Calu3 (cell line): ENCODE measurements at regions of chr15 and their contacts with region 1.

Region 1: GRCh38 chr15:66707310-66708082 is 5.5 kb downstream of the SMAD6 start:
- DNase-seq: peak; percentile 60
- H3K4me3 Mint-ChIP-seq: peak overlapping the region; percentile 98
- H3K27ac Mint-ChIP-seq: no peak overlapping the region
- H3K4me1 Mint-ChIP-seq: peaks cover 21% of the 10 kb centered on the region
- H3K27me3 Mint-ChIP-seq: no peaks in the 10 kb centered on the region
- CTCF ChIP-seq: no peak

Region 2: GRCh38 chr15:66685638-66686150 is 21.8 kb before region 1 on chr15:
- CTCF ChIA-PET with region 1: no interaction called
- intact Hi-C with region 1: no loop called
- DNase-seq: no peak
- H3K4me3 Mint-ChIP-seq: no peak overlapping the region
- H3K27ac Mint-ChIP-seq: no peak overlapping the region
- H3K4me1 Mint-ChIP-seq: no peaks in the 10 kb centered on the region
- H3K27me3 Mint-ChIP-seq: no peaks in the 10 kb centered on the region
- CTCF ChIP-seq: no peak

Region 3: GRCh38 chr15:66720206-66721006 is 12.9 kb after region 1 on chr15:
- CTCF ChIA-PET with region 1: interaction called, 10 read pairs
- intact Hi-C with region 1: no loop called
- DNase-seq: peak; percentile 67
- H3K4me3 Mint-ChIP-seq: no peak overlapping the region
- H3K27ac Mint-ChIP-seq: no peak overlapping the region
- H3K4me1 Mint-ChIP-seq: peaks cover 69% of the 10 kb centered on the region
- H3K27me3 Mint-ChIP-seq: no peaks in the 10 kb centered on the region
- CTCF ChIP-seq: no peak